Gastrocnemius medialis (tissue), 4 donors: ENCODE measurements at regions of chr3 and their contacts with region 1.

Region 1: DNA sequence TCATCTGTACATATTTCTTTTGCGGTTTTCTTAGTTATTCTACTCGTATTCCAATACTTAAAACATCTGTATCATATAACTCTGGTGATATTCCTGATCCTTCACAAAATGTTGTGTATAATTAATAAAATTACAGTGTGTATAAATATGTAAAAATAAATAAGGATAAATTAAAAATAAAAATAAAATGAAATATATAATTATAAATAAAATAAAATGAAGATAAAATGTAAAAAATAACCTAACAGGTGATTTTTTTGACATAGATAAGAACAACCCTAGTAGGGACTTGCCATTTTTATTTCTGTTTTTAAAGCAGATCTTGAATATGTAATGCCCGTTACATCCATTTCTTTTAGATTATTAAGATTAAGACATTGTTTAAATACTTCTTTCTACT is 25.6 kb downstream of the IL1RAP start:
- DNase-seq: no peak
- ATAC-seq: no peak
- H3K4me3 ChIP-seq: no peak overlapping the region
- H3K27ac ChIP-seq: no peak overlapping the region
- H3K4me1 ChIP-seq: peaks cover 0 to under 1% of the 10 kb centered on the region in 2 donors
- H3K27me3 ChIP-seq: no peaks in the 10 kb centered on the region
- CTCF ChIP-seq: no peak
- POLR2A ChIP-seq: no peak

Region 2: GRCh38 chr3:190281308-190282051 is 258.0 kb before region 1 on chr3:
- in situ Hi-C with region 1: no loop called
- intact Hi-C with region 1: no loop called
- DNase-seq: no peak
- ATAC-seq: no peak
- H3K4me3 ChIP-seq: no peak overlapping the region
- H3K27ac ChIP-seq: no peak overlapping the region
- H3K4me1 ChIP-seq: no peaks in the 10 kb centered on the region
- H3K27me3 ChIP-seq: no peaks in the 10 kb centered on the region
- CTCF ChIP-seq: no peak
- POLR2A ChIP-seq: no peak

Region 3: DNA sequence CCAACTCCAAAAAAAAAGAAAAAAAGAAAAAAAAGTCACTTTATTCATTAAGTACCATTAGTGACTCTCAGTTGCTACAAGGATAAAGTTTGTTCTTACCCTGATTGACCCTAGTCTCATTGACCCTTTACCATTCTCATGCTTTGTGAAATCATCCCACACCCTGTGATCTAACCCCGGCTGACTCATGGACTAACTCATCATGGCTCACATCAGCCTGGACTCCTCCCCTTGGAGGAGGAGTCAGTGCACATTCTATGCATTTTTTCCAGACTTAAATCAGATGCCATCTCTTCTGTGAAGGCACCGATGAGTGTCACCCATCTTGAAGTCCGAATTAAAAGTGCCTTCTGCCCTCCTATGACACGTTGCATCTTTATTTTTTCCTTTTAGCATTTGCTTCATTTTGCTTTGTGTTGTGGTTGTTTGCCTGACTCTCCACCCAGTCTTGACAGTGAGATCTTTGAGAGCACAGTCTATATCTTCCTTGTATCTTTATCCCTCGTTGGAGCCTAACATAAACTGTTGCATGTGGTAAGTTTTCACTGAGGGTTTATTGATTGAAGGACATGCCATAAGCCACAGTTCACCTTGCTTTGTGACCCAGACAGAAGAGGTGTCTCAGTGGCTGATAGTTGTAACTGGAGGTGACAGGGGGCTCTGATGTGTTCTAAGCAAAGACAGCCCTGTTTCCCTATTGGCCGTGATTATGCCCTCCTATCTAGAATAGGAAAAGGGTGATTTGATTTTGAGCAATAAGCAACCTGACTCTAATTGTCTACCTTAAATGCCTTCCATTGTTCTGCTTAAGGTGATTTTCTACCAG is 46.5 kb after region 1 on chr3:
- in situ Hi-C with region 1: no loop called
- intact Hi-C with region 1: loop called (anchors 1 kb)
- DNase-seq: no peak
- ATAC-seq: peak in 1 of 2 donors; percentile 39
- H3K4me3 ChIP-seq: no peak overlapping the region
- H3K27ac ChIP-seq: no peak overlapping the region
- H3K4me1 ChIP-seq: no peaks in the 10 kb centered on the region
- H3K27me3 ChIP-seq: no peaks in the 10 kb centered on the region
- CTCF ChIP-seq: no peak
- POLR2A ChIP-seq: no peak